ENCODE measurements at regions of chr16 and their contacts with region 1.

Region 1: DNA sequence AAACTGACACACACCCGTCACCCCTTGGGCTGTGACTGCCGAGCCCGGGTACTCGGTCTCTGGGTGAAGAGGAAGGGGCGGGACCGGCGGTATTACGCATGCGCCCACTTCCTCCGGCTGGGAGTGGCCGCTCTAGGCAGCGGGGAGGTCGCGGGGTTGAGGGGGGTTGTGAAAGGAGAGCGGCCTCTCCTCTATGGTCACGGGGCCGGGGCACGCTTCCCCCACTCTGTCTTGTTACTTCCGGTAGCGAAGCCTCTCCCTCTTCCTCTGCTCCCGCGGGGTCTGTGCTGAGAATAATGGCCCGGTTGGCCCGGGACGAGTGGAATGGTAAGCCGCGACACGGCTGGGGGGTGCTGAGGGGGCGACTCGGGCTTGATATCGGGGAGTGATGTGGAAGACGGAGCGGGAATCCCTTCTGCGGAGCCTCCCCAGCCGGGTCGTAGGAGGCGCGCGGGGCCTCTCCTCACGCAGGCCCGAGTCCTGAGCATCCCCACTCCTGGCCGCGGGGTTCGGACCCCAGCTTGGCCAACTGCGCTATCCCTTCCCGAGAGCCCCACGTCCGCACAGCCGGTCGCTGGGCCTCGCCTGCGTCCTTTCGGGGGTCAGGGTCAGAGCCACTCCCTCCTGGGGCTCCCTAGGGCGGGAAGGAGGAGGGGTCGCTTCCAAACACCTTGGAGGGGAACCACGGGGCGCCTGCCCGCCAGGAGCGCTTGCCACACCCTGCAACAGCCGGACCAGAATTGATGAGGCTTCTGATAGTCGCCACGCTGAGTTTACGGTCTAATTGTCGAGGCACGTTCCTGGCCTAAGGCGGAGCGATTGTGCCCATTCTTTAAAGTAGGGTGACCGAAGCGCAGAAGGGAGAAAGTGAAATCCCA is at the start of gene BFAR:
- DNase-seq: peak; percentile 92
- ATAC-seq: peak; percentile 88
- H3K4me3 ChIP-seq: peak within 1 kb of the TSS; percentile 96
- H3K27ac ChIP-seq: peak within 1 kb of the TSS; percentile 81
- H3K4me1 ChIP-seq: peaks cover 15% of the 10 kb centered on the region
- H3K27me3 ChIP-seq: no peaks in the 10 kb centered on the region
- CTCF ChIP-seq: no peak
- EP300 ChIP-seq: peak in 1 of 2 experiments; percentile 27; a peak in 1 of 4 replicates
- POLR2A ChIP-seq: peak; percentile 95
- RAD21 ChIP-seq: no peak
- polyA plus RNA-seq, gene BFAR: 35.9 to 38.2 TPM

Region 2: DNA sequence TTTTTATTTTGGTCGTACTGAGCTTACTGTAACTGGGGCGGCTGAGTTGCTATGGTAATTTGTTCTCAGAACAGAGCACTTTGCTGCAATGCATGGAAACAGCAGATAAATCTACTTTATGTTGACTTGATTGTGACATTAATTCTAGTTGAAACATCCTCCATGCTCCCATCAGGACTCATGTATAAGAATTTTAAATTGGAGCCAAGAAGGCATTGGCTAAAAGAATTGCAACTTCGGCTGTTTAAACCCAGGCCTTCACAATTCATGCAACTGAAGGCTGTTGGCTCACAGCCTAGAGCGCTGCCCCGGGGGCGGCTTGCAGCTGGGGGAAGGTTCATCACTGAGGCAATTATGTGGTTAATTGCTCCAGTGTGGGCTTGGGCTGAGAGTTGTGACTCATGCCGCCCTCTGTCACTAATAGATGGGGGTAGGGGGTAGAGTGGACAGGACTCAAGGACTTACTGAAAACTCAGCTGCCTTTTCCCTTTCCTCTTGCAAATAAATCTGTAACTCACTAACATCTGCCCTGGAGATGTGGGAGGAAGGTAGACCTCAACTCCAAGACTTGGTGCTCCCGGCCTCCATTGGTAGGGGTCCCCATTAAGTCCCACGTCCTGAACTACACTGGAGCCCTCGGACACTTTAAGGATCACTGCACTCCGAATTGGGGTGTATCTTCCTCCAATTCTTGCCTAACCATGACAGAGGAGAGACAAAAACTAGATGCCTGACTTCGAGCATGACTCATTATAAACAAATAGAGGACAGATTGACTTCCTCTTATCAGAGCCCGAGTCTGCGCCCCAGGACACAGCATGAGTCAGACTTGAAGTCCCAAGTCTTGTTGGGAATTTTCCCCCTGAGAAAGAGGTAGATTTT is 675.5 kb before region 1 on chr16:
- CTCF ChIA-PET with region 1: no interaction called
- POLR2A ChIA-PET with region 1: no interaction called
- RAD21 ChIA-PET with region 1: no interaction called
- SMC1A ChIA-PET with region 1: no interaction called
- in situ Hi-C with region 1: no loop called
- intact Hi-C with region 1: loop called (anchors 5 kb)
- DNase-seq: peak; percentile 56
- ATAC-seq: peak; percentile 84
- H3K4me3 ChIP-seq: peak overlapping the region; percentile 70
- H3K27ac ChIP-seq: peak overlapping the region; percentile 85
- H3K4me1 ChIP-seq: peaks cover 29% of the 10 kb centered on the region
- H3K27me3 ChIP-seq: no peaks in the 10 kb centered on the region
- CTCF ChIP-seq: no peak
- EP300 ChIP-seq: peak; percentile 28 to 31; a peak in 3 of 4 replicates
- POLR2A ChIP-seq: 0 out of 2 replicates have a peak, but pooled peaks have one; percentile 18
- RAD21 ChIP-seq: no peak

Region 3: DNA sequence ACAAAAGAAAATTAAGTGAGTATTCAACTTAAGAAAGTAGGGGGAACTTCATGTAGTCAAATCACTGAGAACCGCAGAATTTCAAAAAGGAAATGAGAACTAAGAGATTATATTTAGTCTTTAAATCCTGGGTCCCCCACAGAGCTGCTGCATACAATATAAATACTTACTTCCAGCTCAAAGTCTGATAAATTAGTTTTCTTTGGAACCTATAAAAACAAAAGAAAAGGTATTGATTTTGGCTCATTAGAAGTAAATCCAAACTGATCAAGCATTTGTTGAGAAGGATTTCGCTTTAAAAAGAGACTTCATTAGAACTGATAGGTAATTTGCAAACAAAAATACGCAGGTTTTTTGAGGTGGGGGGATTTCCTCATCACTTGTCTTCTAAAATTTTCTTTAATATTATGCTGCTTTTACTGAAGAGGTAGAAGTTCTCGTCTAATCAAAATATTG is 24.8 kb before region 1 on chr16:
- CTCF ChIA-PET with region 1: no interaction called
- POLR2A ChIA-PET with region 1: interaction called, 14 read pairs
- RAD21 ChIA-PET with region 1: interaction called, 6 read pairs
- SMC1A ChIA-PET with region 1: interaction called, 22 read pairs
- in situ Hi-C with region 1: no loop called
- intact Hi-C with region 1: loop called (anchors 2 kb)
- DNase-seq: no peak
- ATAC-seq: peak; percentile 86
- H3K4me3 ChIP-seq: peak overlapping the region; percentile 51; the same call in 1 of the 2 replicates
- H3K27ac ChIP-seq: peak overlapping the region; percentile 94
- H3K4me1 ChIP-seq: peaks cover 42% of the 10 kb centered on the region
- H3K27me3 ChIP-seq: no peaks in the 10 kb centered on the region
- CTCF ChIP-seq: no peak
- EP300 ChIP-seq: 0 out of 4 replicates have a peak, but pooled peaks of 1 of the 2 experiments have one; percentile 40
- POLR2A ChIP-seq: no peak
- RAD21 ChIP-seq: no peak

Region 4: GRCh38 chr16:14658063-14658462 is 25.1 kb after region 1 on chr16:
- CTCF ChIA-PET with region 1: no interaction called
- POLR2A ChIA-PET with region 1: interaction called, 4 read pairs
- RAD21 ChIA-PET with region 1: interaction called, 10 read pairs
- SMC1A ChIA-PET with region 1: interaction called, 5 read pairs
- in situ Hi-C with region 1: no loop called
- intact Hi-C with region 1: no loop called
- DNase-seq: peak; percentile 71
- ATAC-seq: peak; percentile 100
- H3K4me3 ChIP-seq: no peak overlapping the region
- H3K27ac ChIP-seq: peak overlapping the region; percentile 57
- H3K4me1 ChIP-seq: peaks cover 5% of the 10 kb centered on the region; the same call in 1 of the 2 replicates
- H3K27me3 ChIP-seq: no peaks in the 10 kb centered on the region
- CTCF ChIP-seq: no peak
- EP300 ChIP-seq: no peak
- POLR2A ChIP-seq: no peak
- RAD21 ChIP-seq: no peak

Region 5: DNA sequence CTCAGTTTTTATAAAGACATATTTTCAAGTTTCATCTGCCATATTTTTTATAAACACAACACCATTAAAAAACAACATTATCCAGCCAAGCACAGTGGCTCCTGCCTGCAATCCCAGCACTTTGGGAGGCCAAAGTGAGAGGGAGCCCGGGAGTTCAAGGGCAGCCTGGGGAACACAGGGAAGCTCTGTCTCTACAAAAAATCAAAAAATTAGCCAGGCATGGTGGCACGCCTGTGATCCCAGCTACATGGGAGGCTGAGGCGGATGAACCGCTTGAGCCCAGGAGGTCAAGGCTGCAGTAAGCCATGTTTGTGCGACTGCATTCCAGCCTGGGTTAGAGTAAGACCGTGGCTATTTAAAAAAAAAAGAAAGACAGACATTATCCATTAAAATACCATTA is 440.2 kb after region 1 on chr16:
- CTCF ChIA-PET with region 1: no interaction called
- POLR2A ChIA-PET with region 1: no interaction called
- RAD21 ChIA-PET with region 1: no interaction called
- SMC1A ChIA-PET with region 1: no interaction called
- in situ Hi-C with region 1: loop called (anchors 25 kb)
- intact Hi-C with region 1: no loop called
- DNase-seq: no peak
- ATAC-seq: no peak
- H3K4me3 ChIP-seq: no peak overlapping the region
- H3K27ac ChIP-seq: no peak overlapping the region
- H3K4me1 ChIP-seq: peaks cover 6% of the 10 kb centered on the region; the same call in 1 of the 2 replicates
- H3K27me3 ChIP-seq: no peaks in the 10 kb centered on the region
- CTCF ChIP-seq: no peak
- EP300 ChIP-seq: no peak
- POLR2A ChIP-seq: no peak
- RAD21 ChIP-seq: no peak

Region 6: DNA sequence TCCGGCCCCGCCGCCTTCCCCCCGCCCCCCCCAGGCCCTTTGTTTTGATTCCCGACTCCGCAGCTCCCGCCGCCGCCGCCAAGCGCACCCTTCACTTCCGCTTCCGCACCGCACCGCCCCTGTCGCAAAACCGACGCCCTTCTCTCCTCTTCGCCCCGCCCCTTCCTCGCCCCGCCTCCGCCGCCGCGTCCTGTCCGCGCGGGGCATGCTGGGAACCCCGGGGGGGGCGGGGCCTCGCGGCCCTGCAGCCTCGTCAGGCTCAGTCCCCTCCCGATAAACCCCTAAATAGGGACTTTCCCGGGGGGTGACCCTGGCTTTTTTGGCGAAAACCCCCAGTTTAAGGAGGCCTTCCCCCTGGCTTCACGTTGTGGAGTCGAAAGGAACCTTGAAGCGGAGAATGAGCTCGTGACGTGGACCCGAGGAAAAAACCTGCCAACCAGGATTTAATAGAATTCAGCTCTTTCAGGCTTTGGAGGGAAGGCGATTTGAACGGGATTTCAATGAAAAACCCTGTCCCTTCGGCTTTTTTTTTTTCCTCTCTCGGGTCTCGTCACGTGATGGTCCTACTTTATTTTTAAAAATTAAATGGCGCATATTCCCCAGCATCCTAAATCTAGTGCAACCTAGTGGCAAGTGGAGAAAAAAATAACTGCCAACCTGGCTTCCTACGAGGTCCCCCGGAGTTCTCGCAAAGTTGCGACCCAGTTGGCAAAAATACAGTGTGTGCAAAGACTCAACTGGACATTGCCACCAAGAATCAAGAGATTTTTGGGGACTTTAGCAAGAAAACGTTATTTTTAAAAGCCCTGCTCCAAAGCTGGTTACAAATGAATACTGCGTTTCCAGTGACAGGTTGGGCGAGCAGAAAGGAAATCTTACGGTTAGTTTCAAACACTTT is 1010.4 kb after region 1 on chr16 and contains the start of gene MARF1:
- CTCF ChIA-PET with region 1: no interaction called
- POLR2A ChIA-PET with region 1: no interaction called
- RAD21 ChIA-PET with region 1: no interaction called
- SMC1A ChIA-PET with region 1: no interaction called
- in situ Hi-C with region 1: loop called (anchors 25 kb)
- intact Hi-C with region 1: no loop called
- DNase-seq: peak; percentile 77
- ATAC-seq: peak; percentile 63
- H3K4me3 ChIP-seq: peak within 1 kb of the TSS; percentile 87
- H3K27ac ChIP-seq: peak within 1 kb of the TSS; percentile 97
- H3K4me1 ChIP-seq: peaks cover 35% of the 10 kb centered on the region
- H3K27me3 ChIP-seq: no peaks in the 10 kb centered on the region
- CTCF ChIP-seq: peak; percentile 19 to 28 (median 24); a peak in 2 of 6 replicates
- EP300 ChIP-seq: no peak; a peak in 1 of 4 replicates
- POLR2A ChIP-seq: peak; percentile 64; the same call in 1 of the 2 replicates
- RAD21 ChIP-seq: 0 out of 2 replicates have a peak, but pooled peaks have one; percentile 7
- polyA plus RNA-seq, gene MARF1: 4.5 to 5.9 TPM